ENCODE measurements at regions of chr9 and their contacts with region 1.

Region 1: DNA sequence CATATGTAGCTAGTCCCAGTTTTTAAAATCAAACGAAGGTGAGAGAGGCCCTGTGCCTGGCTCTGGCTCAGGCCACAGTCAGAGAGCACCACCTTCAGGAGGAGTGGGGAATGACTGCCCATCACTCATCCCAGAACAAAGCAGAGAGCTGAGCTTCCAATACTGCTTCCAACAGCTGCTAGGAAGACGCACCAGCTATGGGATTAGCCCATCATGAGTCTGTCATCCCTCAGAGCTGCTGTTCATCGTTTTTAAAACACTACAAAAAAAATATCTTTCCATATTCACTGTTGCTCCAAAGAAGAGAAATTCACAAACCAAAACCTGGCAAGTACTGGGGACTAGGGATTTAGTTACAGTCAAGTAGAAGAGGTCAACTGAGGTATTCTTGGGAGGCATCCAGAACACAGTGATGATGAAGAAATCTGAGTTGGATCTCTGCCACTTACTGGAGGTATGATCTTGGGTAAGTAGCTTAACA is 102.4 kb downstream of the CDK5RAP2 start:
- DNase-seq: peak in 1 of 2 donors; percentile 64
- ATAC-seq: peak; percentile 91
- H3K4me3 ChIP-seq: no peak overlapping the region
- H3K27ac ChIP-seq: no peak overlapping the region
- H3K4me1 ChIP-seq: no peaks in the 10 kb centered on the region
- H3K27me3 ChIP-seq: no peaks in the 10 kb centered on the region

Region 2: DNA sequence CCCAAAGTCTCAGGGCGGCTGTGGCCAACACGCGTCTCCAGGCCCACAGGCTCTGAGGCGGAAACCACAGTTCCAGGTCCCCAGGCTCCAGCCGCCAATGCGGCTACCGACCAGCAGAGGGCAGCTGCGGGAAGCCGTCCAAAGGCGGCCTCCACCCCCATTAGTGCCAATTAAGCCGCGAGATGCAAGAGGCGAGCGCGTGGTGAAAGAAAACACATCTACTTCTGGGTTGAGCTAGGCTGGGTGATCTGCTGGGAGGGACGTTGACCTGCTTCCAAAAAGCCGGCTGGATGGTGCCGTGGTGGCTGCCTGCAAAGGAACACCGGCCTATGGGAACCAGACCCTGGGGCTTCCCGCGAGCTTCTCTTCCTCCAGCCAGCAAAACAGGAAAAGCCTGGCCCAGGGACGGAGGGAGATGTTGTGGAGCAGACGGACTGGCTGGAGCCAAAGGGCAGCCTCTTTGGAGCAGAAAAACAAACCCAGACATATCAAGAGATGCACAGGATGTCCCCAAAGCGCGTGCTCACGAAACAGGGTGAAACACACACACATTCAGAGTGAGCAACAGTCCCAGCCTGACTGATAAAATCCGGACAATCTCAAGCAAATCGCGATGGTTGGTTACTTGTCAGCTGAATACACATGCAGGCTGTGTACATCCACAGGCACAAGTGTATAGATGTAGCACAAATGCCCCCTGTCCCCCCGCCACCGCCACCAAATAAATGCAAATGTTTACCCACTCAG is 921.3 kb before region 1 on chr9:
- intact Hi-C with region 1: loop called in 1 of 2 experiments (anchors 10 kb)
- DNase-seq: peak; percentile 81 to 92
- ATAC-seq: peak; percentile 93
- H3K4me3 ChIP-seq: no peak overlapping the region
- H3K27ac ChIP-seq: peak overlapping the region in 1 of 2 donors; percentile 7
- H3K4me1 ChIP-seq: no peaks in the 10 kb centered on the region
- H3K27me3 ChIP-seq: no peaks in the 10 kb centered on the region

Region 3: DNA sequence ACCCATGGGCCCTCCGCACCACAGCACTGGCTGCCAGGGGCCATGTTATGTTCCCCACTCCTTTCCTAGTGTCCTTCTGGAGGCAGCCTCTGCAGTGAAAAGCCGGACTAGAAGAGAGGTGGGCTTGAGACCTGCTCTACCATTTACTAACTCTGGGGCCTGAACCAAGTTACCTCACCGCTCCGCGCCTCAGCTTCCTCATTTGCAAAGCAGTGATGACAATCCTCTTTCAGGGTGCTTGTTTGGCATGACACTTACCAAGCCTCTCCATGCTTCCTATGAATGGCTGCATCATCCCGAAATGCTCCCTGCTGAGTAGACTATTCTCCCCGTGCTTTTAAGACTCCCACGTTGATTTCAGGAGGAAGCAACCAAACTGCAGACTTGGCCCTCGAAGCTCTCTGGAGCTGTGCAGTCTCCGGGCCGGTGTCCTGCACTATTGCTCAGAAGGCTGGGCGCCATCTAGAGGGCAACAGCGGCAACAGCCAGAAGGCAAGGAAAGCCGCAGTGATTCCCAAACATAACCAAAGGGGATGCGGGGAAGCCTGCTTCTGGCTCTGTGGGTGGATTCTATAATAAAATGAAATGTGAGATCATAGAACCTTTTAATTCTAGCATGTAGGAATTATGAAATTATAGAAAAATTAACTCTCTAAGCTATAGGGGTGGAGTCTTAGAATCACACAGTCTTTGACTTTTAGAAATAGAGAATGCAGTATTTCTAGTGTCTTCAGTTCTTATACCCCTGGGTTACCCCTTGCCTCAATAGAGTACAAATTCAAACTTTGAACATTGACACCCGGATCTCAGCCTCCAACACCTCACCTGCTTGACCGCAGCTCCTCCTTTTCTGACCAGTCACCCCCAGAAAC is 508.5 kb before region 1 on chr9:
- intact Hi-C with region 1: loop called in 1 of 2 experiments (anchors 10 kb)
- DNase-seq: peak; percentile 87 to 91
- ATAC-seq: peak; percentile 89
- H3K4me3 ChIP-seq: no peak overlapping the region
- H3K27ac ChIP-seq: no peak overlapping the region
- H3K4me1 ChIP-seq: peaks cover 0 to under 1% of the 10 kb centered on the region in 2 donors
- H3K27me3 ChIP-seq: no peaks in the 10 kb centered on the region

Region 4: GRCh38 chr9:120409969-120410368 is 67.6 kb before region 1 on chr9:
- intact Hi-C with region 1: loop called in 1 of 2 experiments (anchors 5 kb)
- DNase-seq: no peak
- ATAC-seq: no peak
- H3K4me3 ChIP-seq: no peak overlapping the region
- H3K27ac ChIP-seq: no peak overlapping the region
- H3K4me1 ChIP-seq: no peaks in the 10 kb centered on the region
- H3K27me3 ChIP-seq: no peaks in the 10 kb centered on the region

Region 5: GRCh38 chr9:120438836-120439546 is 38.6 kb before region 1 on chr9:
- intact Hi-C with region 1: loop called in 1 of 2 experiments (anchors 5 kb)
- DNase-seq: no peak
- ATAC-seq: no peak
- H3K4me3 ChIP-seq: no peak overlapping the region
- H3K27ac ChIP-seq: no peak overlapping the region
- H3K4me1 ChIP-seq: peaks cover 0 to 5% of the 10 kb centered on the region in 2 donors
- H3K27me3 ChIP-seq: no peaks in the 10 kb centered on the region

Measured in aorta (tissue), 5 donors.